GM12878 (cell line): ENCODE measurements at regions of chr1 and their contacts with region 1.

Region 1: DNA sequence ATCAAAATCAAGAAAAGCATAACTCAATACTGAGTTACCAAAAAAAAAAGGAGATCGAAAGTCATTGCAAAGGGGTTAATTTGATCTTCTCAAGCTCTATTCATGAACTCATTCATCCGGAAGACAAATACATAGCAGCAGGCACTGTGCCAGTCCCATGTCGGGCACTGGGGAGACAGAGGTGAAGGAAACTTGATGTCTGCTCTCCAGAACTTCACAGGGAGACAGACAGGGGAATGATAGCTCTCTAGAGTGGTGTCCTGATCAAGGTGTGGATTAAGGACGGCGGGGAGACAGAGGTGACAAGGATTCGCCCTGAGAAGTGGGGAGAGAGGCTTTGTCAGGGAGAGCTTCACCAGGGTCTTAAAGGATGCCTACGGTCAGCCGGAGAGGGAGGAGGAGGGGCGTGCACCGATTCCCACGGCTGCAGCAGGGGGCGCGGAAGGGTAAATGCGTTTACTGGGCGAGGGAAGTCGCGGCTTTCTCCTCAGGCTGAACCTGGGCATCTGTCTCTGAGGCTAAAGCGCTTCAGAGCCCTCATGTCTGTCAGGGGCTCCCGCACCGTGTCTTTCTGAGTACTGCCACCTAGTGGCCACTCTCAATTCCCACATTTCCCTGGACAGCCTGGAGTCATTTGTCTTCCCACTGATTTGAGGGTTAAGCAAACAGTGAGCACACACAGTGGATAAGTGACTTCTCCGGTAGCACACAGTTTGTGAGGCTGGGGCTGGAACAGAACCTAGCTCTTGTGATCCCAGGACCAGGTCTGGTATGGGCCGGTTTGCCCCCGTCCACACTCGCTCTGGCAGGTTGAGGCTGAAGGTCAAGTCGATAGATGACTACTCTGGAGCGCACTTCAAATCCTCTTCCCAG is 152.8 kb downstream of the TENT5C start:
- DNase-seq: peak; percentile 11
- ATAC-seq: peak; percentile 98
- H3K4me3 ChIP-seq: no peak overlapping the region
- H3K27ac ChIP-seq: no peak overlapping the region
- H3K4me1 ChIP-seq: no peaks in the 10 kb centered on the region; the same call in none of the 2 replicates
- H3K27me3 ChIP-seq: peaks cover 0 to 2% of the 10 kb centered on the region in 2 experiments; a peak in 2 of 4 replicates
- CTCF ChIP-seq: peak; percentile 78 to 80 (median 79)
- EP300 ChIP-seq: no peak
- POLR2A ChIP-seq: no peak
- RAD21 ChIP-seq: peak; percentile 66

Region 2: DNA sequence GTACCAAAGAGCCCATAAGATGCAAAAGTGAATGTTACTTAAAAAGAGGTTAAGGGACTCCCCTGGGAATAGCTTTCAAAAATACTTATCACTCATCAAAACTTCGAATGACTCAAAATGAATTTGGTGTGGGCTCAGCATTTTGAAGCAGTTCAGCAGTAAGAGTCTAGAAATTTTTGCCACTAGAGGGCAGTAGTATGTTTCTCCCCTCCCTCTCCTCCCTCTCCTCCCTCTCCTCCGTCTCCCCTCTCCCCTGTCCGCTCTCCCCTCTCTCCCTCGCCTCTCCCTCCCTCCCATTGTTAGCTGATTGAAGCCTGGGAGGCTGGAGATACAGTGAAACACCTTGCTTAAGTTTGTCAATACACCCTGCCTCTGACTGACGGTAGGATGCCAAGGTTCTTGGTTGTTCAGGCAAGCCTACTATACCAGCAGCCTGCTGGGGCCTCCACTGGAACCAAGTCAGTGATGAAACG is 223.6 kb before region 1 on chr1:
- CTCF ChIA-PET with region 1: interaction called, 269 read pairs
- POLR2A ChIA-PET with region 1: no interaction called
- RAD21 ChIA-PET with region 1: interaction called, 26 read pairs
- SMC1A ChIA-PET with region 1: interaction called, 84 read pairs
- in situ Hi-C with region 1: no loop called
- intact Hi-C with region 1: loop called (anchors 5 kb)
- DNase-seq: peak; percentile 28
- ATAC-seq: peak; percentile 96
- H3K4me3 ChIP-seq: no peak overlapping the region
- H3K27ac ChIP-seq: no peak overlapping the region
- H3K4me1 ChIP-seq: no peaks in the 10 kb centered on the region
- H3K27me3 ChIP-seq: no peaks in the 10 kb centered on the region
- CTCF ChIP-seq: peak; percentile 60 to 76 (median 62)
- EP300 ChIP-seq: 0 out of 4 replicates have a peak, but pooled peaks of 1 of the 2 experiments have one; percentile 35
- POLR2A ChIP-seq: no peak
- RAD21 ChIP-seq: peak; percentile 49

Region 3: DNA sequence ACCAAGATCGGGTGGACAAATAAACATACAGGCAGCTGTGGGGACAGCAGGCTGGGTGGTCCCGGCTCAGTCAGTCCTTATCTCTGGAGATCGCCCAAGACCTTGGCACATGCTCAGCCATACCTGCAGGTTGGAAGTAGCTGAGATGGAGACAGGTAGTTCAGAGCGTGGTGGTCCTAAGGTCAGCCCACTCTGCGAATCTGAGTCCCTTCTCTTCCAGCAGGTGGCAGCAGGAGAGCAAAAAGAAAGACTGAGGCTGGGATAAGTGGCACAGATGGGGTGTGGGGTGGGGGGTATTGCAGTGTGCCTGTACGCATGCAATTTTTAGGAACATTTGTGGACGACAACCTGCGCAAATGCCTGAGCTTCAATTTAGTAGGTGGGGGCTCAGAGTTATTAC is 48.0 kb before region 1 on chr1:
- CTCF ChIA-PET with region 1: interaction called, 53 read pairs
- POLR2A ChIA-PET with region 1: no interaction called
- RAD21 ChIA-PET with region 1: no interaction called
- SMC1A ChIA-PET with region 1: interaction called, 3 read pairs
- in situ Hi-C with region 1: no loop called
- intact Hi-C with region 1: loop called (anchors 5 kb)
- DNase-seq: no peak
- ATAC-seq: peak; percentile 53
- H3K4me3 ChIP-seq: no peak overlapping the region
- H3K27ac ChIP-seq: no peak overlapping the region
- H3K4me1 ChIP-seq: no peaks in the 10 kb centered on the region
- H3K27me3 ChIP-seq: no peaks in the 10 kb centered on the region
- CTCF ChIP-seq: peak; percentile 20 to 48 (median 39); a peak in 4 of 6 replicates
- EP300 ChIP-seq: no peak
- POLR2A ChIP-seq: no peak
- RAD21 ChIP-seq: peak; percentile 29

Region 4: DNA sequence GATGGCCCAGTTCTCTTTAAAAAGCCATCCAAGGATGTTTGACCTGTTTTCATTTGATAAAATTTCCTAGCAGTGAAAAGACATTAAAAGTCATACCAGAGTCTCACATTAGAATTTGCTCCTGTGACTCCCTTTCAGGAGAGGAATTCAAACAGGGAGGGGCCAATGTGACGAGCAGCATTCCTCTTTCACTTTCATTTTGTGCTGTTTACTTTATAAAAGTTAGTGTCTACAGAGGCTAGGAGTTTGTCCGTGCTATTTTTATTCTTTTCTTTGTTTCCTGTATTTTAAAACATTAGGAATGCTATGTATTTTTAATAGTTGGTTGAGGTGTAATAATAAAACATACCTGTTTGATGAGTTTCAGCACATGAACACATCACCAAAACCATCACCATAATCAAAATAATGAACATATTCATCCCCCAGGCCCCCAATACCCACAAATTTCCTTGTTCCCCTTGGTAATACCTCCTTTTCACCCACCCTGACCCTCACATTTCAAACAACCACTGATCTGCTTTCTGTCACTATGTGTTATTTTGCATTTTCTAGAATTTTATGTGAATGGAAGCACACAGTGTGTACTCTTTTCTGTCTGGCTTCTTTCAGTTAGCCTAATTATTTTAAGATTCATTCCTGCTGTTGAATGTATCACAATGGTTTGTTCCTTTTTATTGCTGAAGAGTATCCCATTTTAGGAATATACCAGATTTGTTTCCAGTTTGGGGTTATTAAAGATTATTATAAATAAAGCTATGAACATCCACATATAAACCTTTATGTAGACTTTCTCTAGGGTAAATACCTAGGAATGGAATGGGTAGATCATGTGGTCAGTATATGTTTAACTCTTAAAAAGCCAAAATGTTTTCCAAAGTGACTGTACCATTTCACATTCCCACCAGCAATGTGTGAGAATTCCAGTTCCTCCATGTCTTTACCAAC is 23.4 kb before region 1 on chr1:
- CTCF ChIA-PET with region 1: interaction called, 13 read pairs
- POLR2A ChIA-PET with region 1: no interaction called
- RAD21 ChIA-PET with region 1: no interaction called
- SMC1A ChIA-PET with region 1: interaction called, 3 read pairs
- in situ Hi-C with region 1: no loop called
- intact Hi-C with region 1: no loop called
- DNase-seq: peak; percentile 9
- ATAC-seq: peak; percentile 69
- H3K4me3 ChIP-seq: no peak overlapping the region
- H3K27ac ChIP-seq: no peak overlapping the region
- H3K4me1 ChIP-seq: 0 out of 2 replicates have a peak, but pooled peaks cover 2% of the 10 kb centered on the region
- H3K27me3 ChIP-seq: no peaks in the 10 kb centered on the region; a peak in 1 of 4 replicates
- CTCF ChIP-seq: no peak
- EP300 ChIP-seq: no peak
- POLR2A ChIP-seq: no peak
- RAD21 ChIP-seq: no peak

Region 5: GRCh38 chr1:117770981-117771531 is 12.4 kb after region 1 on chr1:
- CTCF ChIA-PET with region 1: interaction called, 15 read pairs
- POLR2A ChIA-PET with region 1: no interaction called
- RAD21 ChIA-PET with region 1: no interaction called
- SMC1A ChIA-PET with region 1: no interaction called
- in situ Hi-C with region 1: no loop called
- intact Hi-C with region 1: no loop called
- DNase-seq: no peak
- ATAC-seq: no peak
- H3K4me3 ChIP-seq: no peak overlapping the region
- H3K27ac ChIP-seq: no peak overlapping the region
- H3K4me1 ChIP-seq: no peaks in the 10 kb centered on the region
- H3K27me3 ChIP-seq: no peaks in the 10 kb centered on the region
- CTCF ChIP-seq: no peak
- EP300 ChIP-seq: no peak
- POLR2A ChIP-seq: no peak
- RAD21 ChIP-seq: no peak